ENCODE measurements at regions of chr12 and their contacts with region 1.

Region 1: GRCh38 chr12:98123021-98123797 is 392.2 kb upstream of the TMPO start:
- DNase-seq: no peak
- ATAC-seq: no peak

Region 2: DNA sequence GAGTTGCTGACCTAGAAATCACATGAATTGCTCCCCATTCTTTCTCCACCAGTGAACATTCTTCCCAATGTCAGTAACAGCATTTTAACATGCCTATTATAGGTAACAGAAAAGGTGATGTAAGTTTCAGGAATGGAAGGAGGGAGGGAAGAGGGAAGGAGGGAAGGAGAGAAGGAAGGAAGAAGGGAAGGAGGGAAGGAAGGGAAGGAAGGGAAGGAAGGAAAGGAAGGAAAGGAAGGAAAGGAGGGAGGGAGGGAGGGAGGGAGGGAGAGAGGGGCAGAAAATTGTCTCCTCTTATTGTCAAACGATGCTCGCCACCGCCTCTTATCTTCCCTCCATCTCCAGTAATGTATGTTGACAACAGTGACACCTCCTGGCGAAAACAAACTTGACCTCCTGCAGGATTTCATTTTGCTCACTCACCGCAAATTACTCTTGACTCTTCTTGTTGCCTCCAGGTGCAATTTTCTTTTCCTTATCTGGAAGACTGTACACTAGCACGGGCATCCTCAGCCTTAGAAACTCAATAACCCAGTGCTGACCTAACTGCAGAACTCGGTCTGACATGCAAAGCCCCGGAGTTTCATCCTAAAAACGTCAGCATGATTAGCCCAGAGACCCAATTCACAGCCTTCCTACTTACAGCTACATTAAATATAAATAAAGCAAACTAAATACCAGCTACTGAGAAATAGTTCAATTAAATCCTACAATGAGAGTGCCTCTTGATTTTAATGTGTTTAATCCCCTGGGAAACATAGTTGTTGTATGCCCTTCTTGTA is 120.3 kb before region 1 on chr12:
- intact Hi-C with region 1: no loop called
- DNase-seq: no peak
- ATAC-seq: no peak

Region 3: DNA sequence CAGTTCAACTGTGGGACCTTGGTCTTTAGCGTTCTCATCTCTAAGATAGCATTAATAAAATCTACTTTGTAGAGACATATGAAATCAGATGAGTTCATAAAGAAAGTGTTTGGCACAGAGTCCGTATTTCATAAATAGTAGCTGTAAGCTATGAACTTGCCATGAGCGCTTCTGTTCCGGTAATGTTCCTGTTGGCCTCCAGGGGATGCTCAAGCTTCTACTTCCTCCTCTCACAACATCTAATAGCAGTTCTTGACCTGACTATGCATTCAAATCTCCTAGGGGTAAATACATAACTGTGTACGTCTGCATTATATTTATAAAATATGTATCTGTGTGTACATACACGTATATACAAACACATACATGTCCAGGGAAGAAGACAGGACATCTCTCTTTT is 104.0 kb after region 1 on chr12:
- intact Hi-C with region 1: loop called in 1 of 2 experiments (anchors 5 kb)
- DNase-seq: no peak
- ATAC-seq: no peak